HCT116 (cell line): ENCODE measurements at regions of chr4 and their contacts with region 1.

Region 1: DNA sequence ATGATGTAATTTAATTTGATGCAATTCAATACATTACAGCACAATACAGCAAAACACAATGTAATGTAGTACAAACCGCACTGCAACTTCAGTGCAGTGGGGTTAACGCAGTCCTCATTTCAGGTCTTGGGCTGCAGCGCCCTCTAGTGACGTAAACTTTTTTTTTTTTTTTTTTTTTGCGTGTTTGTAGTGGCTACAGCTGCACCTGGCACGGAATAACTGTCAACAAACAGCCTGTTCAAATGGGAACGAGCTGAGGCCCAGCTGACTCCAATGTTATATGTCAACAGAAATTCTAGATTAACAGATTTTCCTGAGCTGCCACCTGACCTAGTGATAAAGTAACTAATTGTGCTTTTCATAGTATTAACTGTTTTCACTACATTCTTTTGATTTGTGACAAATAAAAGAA is 33.5 kb upstream of the RASSF6 start:
- DNase-seq: peak; percentile 33
- ATAC-seq: peak; percentile 84
- H3K4me3 ChIP-seq: no peak overlapping the region
- H3K27ac ChIP-seq: no peak overlapping the region
- H3K4me1 ChIP-seq: no peaks in the 10 kb centered on the region
- H3K27me3 ChIP-seq: no peaks in the 10 kb centered on the region
- CTCF ChIP-seq: peak; percentile 45 to 87 (median 73); a peak in 5 of 6 replicates
- POLR2A ChIP-seq: no peak
- RAD21 ChIP-seq: peak; percentile 91

Region 2: GRCh38 chr4:72919937-72920336 is 733.8 kb before region 1 on chr4:
- CTCF ChIA-PET with region 1: no interaction called
- POLR2A ChIA-PET with region 1: no interaction called
- RAD21 ChIA-PET with region 1: no interaction called
- intact Hi-C with region 1: no loop called
- DNase-seq: no peak
- ATAC-seq: no peak
- H3K4me3 ChIP-seq: no peak overlapping the region
- H3K27ac ChIP-seq: no peak overlapping the region
- H3K4me1 ChIP-seq: no peaks in the 10 kb centered on the region
- H3K27me3 ChIP-seq: no peaks in the 10 kb centered on the region
- CTCF ChIP-seq: no peak
- POLR2A ChIP-seq: no peak
- RAD21 ChIP-seq: no peak

Region 3: GRCh38 chr4:73311428-73311827 is 342.3 kb before region 1 on chr4:
- CTCF ChIA-PET with region 1: interaction called, 6 read pairs
- POLR2A ChIA-PET with region 1: no interaction called
- RAD21 ChIA-PET with region 1: interaction called in 1 of 2 experiments, 6 read pairs
- intact Hi-C with region 1: loop called (anchors 1 kb)
- DNase-seq: peak; percentile 8
- ATAC-seq: no peak
- H3K4me3 ChIP-seq: no peak overlapping the region
- H3K27ac ChIP-seq: no peak overlapping the region
- H3K4me1 ChIP-seq: no peaks in the 10 kb centered on the region
- H3K27me3 ChIP-seq: no peaks in the 10 kb centered on the region
- CTCF ChIP-seq: peak; percentile 12 to 60 (median 42); a peak in 3 of 6 replicates
- POLR2A ChIP-seq: no peak
- RAD21 ChIP-seq: peak; percentile 55

Region 4: GRCh38 chr4:73341454-73341853 is 312.2 kb before region 1 on chr4:
- CTCF ChIA-PET with region 1: interaction called, 35 read pairs
- POLR2A ChIA-PET with region 1: no interaction called
- RAD21 ChIA-PET with region 1: interaction called, 3 to 6 read pairs
- intact Hi-C with region 1: loop called (anchors 1 kb)
- DNase-seq: peak; percentile 33
- ATAC-seq: peak; percentile 85
- H3K4me3 ChIP-seq: no peak overlapping the region
- H3K27ac ChIP-seq: no peak overlapping the region
- H3K4me1 ChIP-seq: no peaks in the 10 kb centered on the region
- H3K27me3 ChIP-seq: no peaks in the 10 kb centered on the region
- CTCF ChIP-seq: peak; percentile 52 to 82 (median 65)
- POLR2A ChIP-seq: no peak
- RAD21 ChIP-seq: peak; percentile 84

Region 5: GRCh38 chr4:73573794-73574406 is 79.8 kb before region 1 on chr4:
- CTCF ChIA-PET with region 1: interaction called, 34 read pairs
- POLR2A ChIA-PET with region 1: no interaction called
- RAD21 ChIA-PET with region 1: interaction called, 7 read pairs
- intact Hi-C with region 1: loop called (anchors 1 kb)
- DNase-seq: peak; percentile 54
- ATAC-seq: peak; percentile 88
- H3K4me3 ChIP-seq: no peak overlapping the region
- H3K27ac ChIP-seq: no peak overlapping the region
- H3K4me1 ChIP-seq: no peaks in the 10 kb centered on the region
- H3K27me3 ChIP-seq: no peaks in the 10 kb centered on the region
- CTCF ChIP-seq: peak; percentile 68 to 91 (median 88); a peak in 5 of 6 replicates
- POLR2A ChIP-seq: no peak
- RAD21 ChIP-seq: peak; percentile 86

Region 6: DNA sequence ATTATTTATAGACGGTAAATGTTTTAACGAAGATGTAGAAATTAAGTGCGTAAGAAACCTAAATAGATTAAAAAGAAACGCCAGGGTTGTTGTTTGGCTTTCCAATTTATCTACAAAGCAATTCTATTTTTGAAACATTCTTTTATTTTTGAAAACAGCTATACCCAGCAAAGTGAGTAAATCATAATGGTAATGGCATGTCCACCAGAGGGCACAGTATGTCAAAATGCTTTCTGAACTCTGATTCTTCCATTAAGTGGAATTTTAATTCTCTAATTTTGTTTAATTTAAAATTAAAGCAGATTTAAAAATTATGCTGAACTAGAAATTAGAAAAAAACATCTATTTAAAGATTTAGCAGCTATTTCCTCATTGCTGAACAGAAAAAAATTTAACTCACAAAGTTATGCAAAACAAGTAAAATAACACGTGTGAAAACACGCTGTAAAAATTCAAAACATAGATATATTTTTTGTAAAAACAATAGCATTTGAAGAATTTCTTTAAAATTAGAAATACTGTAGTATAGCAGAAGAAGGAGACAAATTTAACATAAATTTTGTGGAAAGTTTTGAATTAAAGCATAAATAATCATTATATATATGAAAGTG is 60.0 kb before region 1 on chr4:
- CTCF ChIA-PET with region 1: interaction called, 38 read pairs
- POLR2A ChIA-PET with region 1: no interaction called
- RAD21 ChIA-PET with region 1: interaction called, 4 to 8 read pairs
- intact Hi-C with region 1: loop called (anchors 1 kb)
- DNase-seq: peak; percentile 18
- ATAC-seq: no peak
- H3K4me3 ChIP-seq: no peak overlapping the region
- H3K27ac ChIP-seq: no peak overlapping the region
- H3K4me1 ChIP-seq: peaks cover 5% of the 10 kb centered on the region in 2 experiments; a peak in 3 of 4 replicates
- H3K27me3 ChIP-seq: no peaks in the 10 kb centered on the region
- CTCF ChIP-seq: peak; percentile 54 to 64 (median 55); a peak in 5 of 6 replicates
- POLR2A ChIP-seq: no peak
- RAD21 ChIP-seq: peak; percentile 61

Region 7: GRCh38 chr4:74590152-74590875 is 936.6 kb after region 1 on chr4:
- CTCF ChIA-PET with region 1: no interaction called
- POLR2A ChIA-PET with region 1: no interaction called
- RAD21 ChIA-PET with region 1: no interaction called
- intact Hi-C with region 1: no loop called
- DNase-seq: no peak
- ATAC-seq: no peak
- H3K4me3 ChIP-seq: no peak overlapping the region
- H3K27ac ChIP-seq: no peak overlapping the region
- H3K4me1 ChIP-seq: peaks cover 0 to 11% of the 10 kb centered on the region in 2 experiments; a peak in 1 of 4 replicates
- H3K27me3 ChIP-seq: no peaks in the 10 kb centered on the region
- CTCF ChIP-seq: no peak
- POLR2A ChIP-seq: no peak
- RAD21 ChIP-seq: no peak